ENCODE measurements at regions of chr12 and their contacts with region 1.

Region 1: GRCh38 chr12:56258057-56258819 is at the start of gene ANKRD52:
- DNase-seq: peak; percentile 70
- H3K4me3 Mint-ChIP-seq: peak within 1 kb of the TSS; percentile 84
- H3K27ac Mint-ChIP-seq: peak within 1 kb of the TSS; percentile 71
- H3K4me1 Mint-ChIP-seq: peaks cover 29% of the 10 kb centered on the region
- H3K27me3 Mint-ChIP-seq: no peaks in the 10 kb centered on the region
- CTCF ChIP-seq: peak; percentile 59
- total RNA-seq, gene ANKRD52: 46.3 and 73.8 TPM in 2 replicates

Region 2: DNA sequence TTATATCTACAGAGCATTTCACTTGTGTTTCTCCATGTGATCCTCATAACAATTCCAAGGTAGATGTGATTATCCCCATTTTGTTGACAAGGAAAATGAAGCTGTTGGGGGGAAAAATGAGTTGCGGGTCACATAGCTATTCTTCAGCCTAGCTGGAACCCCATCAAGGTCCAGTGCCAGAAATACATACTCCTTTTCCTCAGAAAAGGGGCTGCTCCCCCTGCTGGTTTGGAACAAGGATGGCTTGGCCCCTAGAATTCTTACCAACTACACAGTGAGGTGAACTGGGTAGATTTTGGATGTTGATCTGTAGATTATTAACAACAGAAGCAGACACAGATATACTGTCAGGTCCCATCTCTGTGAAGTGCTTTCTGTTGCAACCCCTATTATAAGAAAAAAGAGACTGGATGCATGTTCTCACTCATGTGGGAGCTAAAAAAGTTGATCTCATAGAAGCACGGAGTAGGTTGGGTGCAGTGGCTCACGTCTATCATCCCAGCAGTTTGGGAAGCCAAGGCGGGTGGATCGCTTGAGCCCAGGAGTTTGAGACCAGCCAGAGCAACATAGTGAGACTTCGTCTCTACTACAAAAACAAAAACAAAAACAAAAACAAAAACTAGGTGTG is 228.5 kb before region 1 on chr12:
- CTCF ChIA-PET with region 1: no interaction called
- POLR2A ChIA-PET with region 1: no interaction called
- intact Hi-C with region 1: no loop called
- DNase-seq: peak; percentile 69
- H3K4me3 Mint-ChIP-seq: no peak overlapping the region
- H3K27ac Mint-ChIP-seq: no peak overlapping the region
- H3K4me1 Mint-ChIP-seq: peaks cover 11% of the 10 kb centered on the region
- H3K27me3 Mint-ChIP-seq: no peaks in the 10 kb centered on the region
- CTCF ChIP-seq: peak; percentile 68

Region 3: GRCh38 chr12:56206457-56207166 is 51.6 kb before region 1 on chr12:
- CTCF ChIA-PET with region 1: interaction called, 13 read pairs
- POLR2A ChIA-PET with region 1: interaction called, 3 read pairs
- intact Hi-C with region 1: no loop called
- DNase-seq: peak; percentile 54
- H3K4me3 Mint-ChIP-seq: no peak overlapping the region
- H3K27ac Mint-ChIP-seq: no peak overlapping the region
- H3K4me1 Mint-ChIP-seq: peaks cover 5% of the 10 kb centered on the region
- H3K27me3 Mint-ChIP-seq: no peaks in the 10 kb centered on the region
- CTCF ChIP-seq: peak; percentile 28

Region 4: DNA sequence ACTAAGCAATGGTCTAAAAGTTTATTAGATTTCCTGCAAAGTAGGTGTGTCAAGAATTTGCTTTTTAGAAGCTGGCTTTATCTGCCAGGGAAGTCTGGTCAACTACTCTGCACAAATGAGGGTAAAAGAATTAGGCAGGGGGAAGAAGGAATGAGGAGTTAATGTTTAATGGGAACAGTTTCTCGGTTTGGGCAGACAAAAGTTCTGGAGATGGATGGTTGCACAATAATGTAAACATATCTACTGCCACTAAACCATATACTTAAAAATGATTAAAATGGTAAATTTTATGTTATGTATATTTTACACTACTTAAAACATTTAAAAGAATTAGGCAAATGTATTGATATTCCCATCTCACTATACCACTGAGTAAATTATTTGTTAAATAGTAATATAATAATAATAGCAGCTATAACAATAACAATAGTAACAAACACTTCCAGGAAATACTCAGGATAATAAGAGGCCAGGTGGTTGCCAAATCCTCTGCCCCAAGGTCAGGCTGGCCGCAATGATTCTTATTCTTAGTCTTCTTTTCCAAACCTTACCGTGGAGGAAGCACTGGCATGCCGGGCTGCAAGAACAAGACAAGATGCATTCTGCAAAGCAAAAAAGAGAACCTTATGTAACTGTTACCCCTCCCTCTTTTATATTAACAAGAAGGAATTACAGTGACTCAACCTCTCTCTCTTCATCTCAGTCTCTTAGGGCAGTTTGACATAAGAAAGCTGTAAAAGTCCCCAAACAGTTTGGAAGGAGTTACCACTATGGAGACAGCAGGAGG is 28.0 kb after region 1 on chr12:
- CTCF ChIA-PET with region 1: interaction called, 14 read pairs
- POLR2A ChIA-PET with region 1: interaction called, 12 read pairs
- intact Hi-C with region 1: no loop called
- DNase-seq: no peak
- H3K4me3 Mint-ChIP-seq: no peak overlapping the region
- H3K27ac Mint-ChIP-seq: no peak overlapping the region
- H3K4me1 Mint-ChIP-seq: peaks cover 3% of the 10 kb centered on the region
- H3K27me3 Mint-ChIP-seq: no peaks in the 10 kb centered on the region
- CTCF ChIP-seq: no peak

Region 5: DNA sequence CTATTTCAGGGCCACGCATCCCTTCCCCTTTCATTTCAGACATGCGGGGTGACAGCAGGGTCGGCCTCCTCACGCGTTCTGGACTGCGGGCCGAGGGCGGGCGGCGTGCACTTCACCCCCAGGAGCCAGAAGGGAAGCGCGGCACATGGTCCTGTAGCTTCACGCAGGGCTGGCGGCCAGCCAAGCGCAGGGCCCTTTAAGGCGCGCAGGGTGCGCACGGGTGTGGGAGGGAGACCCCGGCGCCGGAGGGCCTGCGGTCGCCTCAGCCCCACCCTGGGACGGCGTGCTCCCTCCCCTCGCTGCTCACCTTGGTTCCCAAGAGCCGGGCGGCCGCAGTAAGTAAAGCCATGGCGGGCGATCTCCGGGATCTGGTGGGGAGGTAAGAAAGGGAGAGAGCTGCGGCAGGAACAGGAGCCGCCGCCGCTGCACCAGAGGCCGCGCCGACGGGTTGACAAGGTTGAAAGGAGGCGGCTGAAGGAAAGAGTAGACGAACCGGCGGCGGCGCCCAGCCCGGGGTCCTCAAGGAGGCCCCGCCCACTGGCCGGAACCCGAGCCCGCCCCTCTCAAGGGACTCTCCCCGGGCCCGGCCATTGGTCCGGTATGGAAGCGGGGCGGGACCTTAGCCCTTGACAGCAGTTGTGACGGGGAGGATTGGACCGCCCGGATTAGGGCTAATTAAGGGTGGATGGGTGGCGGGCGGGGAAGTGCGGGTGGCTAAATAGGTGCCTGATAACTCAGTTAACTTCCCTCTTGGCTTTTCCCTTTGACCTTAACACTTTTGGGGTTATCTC is 41.8 kb after region 1 on chr12 and contains the start of gene CS:
- CTCF ChIA-PET with region 1: interaction called, 4 read pairs
- POLR2A ChIA-PET with region 1: interaction called, 14 read pairs
- intact Hi-C with region 1: no loop called
- DNase-seq: peak; percentile 99
- H3K4me3 Mint-ChIP-seq: peak within 1 kb of the TSS; percentile 95
- H3K27ac Mint-ChIP-seq: peak within 1 kb of the TSS; percentile 84
- H3K4me1 Mint-ChIP-seq: peaks cover 19% of the 10 kb centered on the region
- H3K27me3 Mint-ChIP-seq: no peaks in the 10 kb centered on the region
- CTCF ChIP-seq: no peak
- total RNA-seq, gene CS: 213 and 257 TPM in 2 replicates

Measured in MCF 10A (cell line).